ENCODE measurements at regions of chr5 and their contacts with region 1.

Region 1: DNA sequence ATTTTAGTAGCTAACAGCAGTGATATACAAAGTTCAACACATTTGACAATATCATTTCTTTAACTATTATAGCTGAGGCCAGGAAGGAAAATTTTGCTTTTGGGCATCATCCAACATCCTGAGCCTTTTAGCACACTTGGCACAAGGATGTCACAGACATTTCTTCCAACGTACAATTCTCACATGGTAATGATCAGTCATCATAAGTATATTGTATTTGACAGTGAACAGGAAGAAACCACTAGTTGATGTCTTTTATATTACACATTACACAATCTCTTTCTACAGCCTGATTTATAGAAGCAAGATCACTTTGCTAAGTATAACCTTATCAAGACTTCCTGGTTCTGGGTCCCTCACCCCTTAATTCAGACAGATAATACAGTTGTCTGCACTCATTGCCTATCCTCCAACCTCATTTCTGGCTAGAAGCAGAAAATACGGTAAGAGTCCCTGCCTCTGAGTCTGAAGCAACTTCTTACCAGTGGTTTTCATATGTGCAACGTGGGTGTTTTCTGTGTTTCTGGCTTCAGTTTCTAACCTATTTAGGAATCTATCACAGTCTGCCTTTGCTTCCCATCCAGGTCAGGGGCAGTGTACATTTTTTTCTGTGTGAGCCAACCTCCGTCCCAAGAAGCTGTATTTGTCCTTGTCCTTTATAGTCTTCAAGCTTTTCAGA is 167.8 kb downstream of the PAM start:
- DNase-seq: no peak
- ATAC-seq: no peak
- H3K4me3 ChIP-seq: no peak overlapping the region
- H3K4me3 Mint-ChIP-seq: no peak overlapping the region
- H3K27ac ChIP-seq: no peak overlapping the region
- H3K27ac Mint-ChIP-seq: no peak overlapping the region
- H3K4me1 ChIP-seq: no peaks in the 10 kb centered on the region
- H3K4me1 Mint-ChIP-seq: no peaks in the 10 kb centered on the region
- H3K27me3 ChIP-seq: no peaks in the 10 kb centered on the region
- H3K27me3 Mint-ChIP-seq: no peaks in the 10 kb centered on the region

Region 2: DNA sequence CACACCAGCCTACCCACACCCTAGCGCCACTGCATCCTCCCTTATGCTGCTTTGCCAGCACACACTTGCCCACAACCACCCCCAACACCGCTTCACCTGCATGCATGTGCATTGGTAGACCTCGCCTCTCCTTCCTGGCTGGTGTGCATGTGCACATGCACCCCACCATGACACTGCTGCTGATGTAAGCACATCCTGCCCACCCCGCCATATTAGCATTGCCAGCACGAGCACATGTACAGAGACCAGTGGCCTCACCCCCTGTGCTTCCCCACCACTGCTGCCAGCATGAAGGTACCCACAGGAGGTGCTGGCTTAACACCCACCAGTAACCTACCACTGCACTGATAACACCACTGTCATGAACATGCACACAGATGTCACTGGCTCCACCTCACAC is 845.0 kb before region 1 on chr5:
- CTCF ChIA-PET with region 1: no interaction called
- POLR2A ChIA-PET with region 1: interaction called in 1 of 2 experiments, 19 read pairs
- DNase-seq: no peak
- ATAC-seq: no peak
- H3K4me3 ChIP-seq: no peak overlapping the region
- H3K4me3 Mint-ChIP-seq: no peak overlapping the region
- H3K27ac ChIP-seq: no peak overlapping the region
- H3K27ac Mint-ChIP-seq: no peak overlapping the region
- H3K4me1 ChIP-seq: no peaks in the 10 kb centered on the region
- H3K4me1 Mint-ChIP-seq: no peaks in the 10 kb centered on the region
- H3K27me3 ChIP-seq: peaks cover 0 to 6% of the 10 kb centered on the region in 2 experiments
- H3K27me3 Mint-ChIP-seq: no peaks in the 10 kb centered on the region

Region 3: GRCh38 chr5:102617191-102618187 is 305.4 kb before region 1 on chr5:
- CTCF ChIA-PET with region 1: no interaction called
- POLR2A ChIA-PET with region 1: no interaction called
- DNase-seq: no peak
- ATAC-seq: no peak
- H3K4me3 ChIP-seq: no peak overlapping the region
- H3K4me3 Mint-ChIP-seq: no peak overlapping the region
- H3K27ac ChIP-seq: no peak overlapping the region
- H3K27ac Mint-ChIP-seq: no peak overlapping the region
- H3K4me1 ChIP-seq: no peaks in the 10 kb centered on the region
- H3K4me1 Mint-ChIP-seq: no peaks in the 10 kb centered on the region
- H3K27me3 ChIP-seq: no peaks in the 10 kb centered on the region
- H3K27me3 Mint-ChIP-seq: peaks cover 16 to 20% of the 10 kb centered on the region in 2 donors

Region 4: DNA sequence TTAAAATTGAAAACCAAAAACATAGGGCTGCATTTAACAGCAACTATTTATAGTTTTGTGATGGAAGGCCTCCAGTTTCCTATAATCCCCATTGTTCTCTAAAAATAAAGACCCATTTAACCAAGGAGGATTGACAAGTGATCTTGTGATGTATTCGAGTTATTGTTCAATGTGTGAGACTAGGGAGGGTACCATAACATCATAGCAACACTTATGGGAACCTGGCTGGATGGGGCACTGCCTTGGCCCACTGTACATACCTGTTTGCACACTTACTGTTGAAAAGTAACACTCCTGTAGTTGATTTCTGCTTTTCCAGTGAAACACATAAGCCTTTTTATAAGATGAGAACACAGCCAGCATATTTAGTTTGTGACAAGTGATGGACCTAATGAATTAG is 367.9 kb after region 1 on chr5:
- CTCF ChIA-PET with region 1: no interaction called
- POLR2A ChIA-PET with region 1: no interaction called
- DNase-seq: no peak
- ATAC-seq: no peak
- H3K4me3 ChIP-seq: no peak overlapping the region
- H3K4me3 Mint-ChIP-seq: no peak overlapping the region
- H3K27ac ChIP-seq: no peak overlapping the region
- H3K27ac Mint-ChIP-seq: no peak overlapping the region
- H3K4me1 ChIP-seq: no peaks in the 10 kb centered on the region
- H3K4me1 Mint-ChIP-seq: no peaks in the 10 kb centered on the region
- H3K27me3 ChIP-seq: no peaks in the 10 kb centered on the region
- H3K27me3 Mint-ChIP-seq: no peaks in the 10 kb centered on the region